H1 (cell line): ENCODE measurements at regions of chr11 and their contacts with region 1.

Region 1: GRCh38 chr11:17730608-17731462 is 3.7 kb upstream of the KCNC1 start:
- DNase-seq: peak; percentile 58 to 95
- H3K4me3 ChIP-seq: no peak overlapping the region
- H3K27ac ChIP-seq: no peak overlapping the region
- H3K4me1 ChIP-seq: peaks cover 0 to 4% (median under 1%) of the 10 kb centered on the region in 4 experiments; a peak in 3 of 7 replicates
- H3K27me3 ChIP-seq: peaks cover 9 to 30% (median 24%) of the 10 kb centered on the region in 4 experiments
- CTCF ChIP-seq: peak; percentile 93 to 98 (median 94)
- EP300 ChIP-seq: no peak
- POLR2A ChIP-seq: no peak
- RAD21 ChIP-seq: peak; percentile 98

Region 2: GRCh38 chr11:17457396-17458173 is 273.2 kb before region 1 on chr11:
- CTCF ChIA-PET with region 1: no interaction called
- POLR2A ChIA-PET with region 1: no interaction called
- DNase-seq: no peak
- H3K4me3 ChIP-seq: no peak overlapping the region; a peak in 1 of 8 replicates
- H3K27ac ChIP-seq: no peak overlapping the region
- H3K4me1 ChIP-seq: peaks cover 4 to 12% (median 9%) of the 10 kb centered on the region in 4 experiments; a peak in 6 of 7 replicates
- H3K27me3 ChIP-seq: no peaks in the 10 kb centered on the region
- CTCF ChIP-seq: no peak
- EP300 ChIP-seq: no peak
- POLR2A ChIP-seq: no peak
- RAD21 ChIP-seq: no peak

Region 3: GRCh38 chr11:17544181-17544622 is 186.6 kb before region 1 on chr11 and contains the start of gene USH1C:
- CTCF ChIA-PET with region 1: interaction called, 16 read pairs
- POLR2A ChIA-PET with region 1: no interaction called
- DNase-seq: peak in 1 of 2 experiments; percentile 95
- H3K4me3 ChIP-seq: peak within 1 kb of the TSS; percentile 50 to 77 (median 62)
- H3K27ac ChIP-seq: no peak within 1 kb of the TSS
- H3K4me1 ChIP-seq: peaks cover 6 to 20% (median 9%) of the 10 kb centered on the region in 4 experiments
- H3K27me3 ChIP-seq: peaks cover 0 to 24% (median 8%) of the 10 kb centered on the region in 4 experiments; a peak in 4 of 7 replicates
- CTCF ChIP-seq: no peak
- EP300 ChIP-seq: no peak
- POLR2A ChIP-seq: no peak; a peak in 1 of 3 replicates
- RAD21 ChIP-seq: no peak
- total RNA-seq, gene USH1C: 1.3 and 2.4 TPM in 2 replicates

Region 4: GRCh38 chr11:17650127-17650911 is 80.5 kb before region 1 on chr11:
- CTCF ChIA-PET with region 1: interaction called, 18 read pairs
- POLR2A ChIA-PET with region 1: no interaction called
- DNase-seq: no peak
- H3K4me3 ChIP-seq: no peak overlapping the region
- H3K27ac ChIP-seq: no peak overlapping the region
- H3K4me1 ChIP-seq: peaks cover 3 to 9% (median 7%) of the 10 kb centered on the region in 4 experiments; a peak in 6 of 7 replicates
- H3K27me3 ChIP-seq: peaks cover 0 to 9% (median 3%) of the 10 kb centered on the region in 4 experiments; a peak in 3 of 7 replicates
- CTCF ChIP-seq: no peak
- EP300 ChIP-seq: no peak
- POLR2A ChIP-seq: no peak
- RAD21 ChIP-seq: no peak

Region 5: DNA sequence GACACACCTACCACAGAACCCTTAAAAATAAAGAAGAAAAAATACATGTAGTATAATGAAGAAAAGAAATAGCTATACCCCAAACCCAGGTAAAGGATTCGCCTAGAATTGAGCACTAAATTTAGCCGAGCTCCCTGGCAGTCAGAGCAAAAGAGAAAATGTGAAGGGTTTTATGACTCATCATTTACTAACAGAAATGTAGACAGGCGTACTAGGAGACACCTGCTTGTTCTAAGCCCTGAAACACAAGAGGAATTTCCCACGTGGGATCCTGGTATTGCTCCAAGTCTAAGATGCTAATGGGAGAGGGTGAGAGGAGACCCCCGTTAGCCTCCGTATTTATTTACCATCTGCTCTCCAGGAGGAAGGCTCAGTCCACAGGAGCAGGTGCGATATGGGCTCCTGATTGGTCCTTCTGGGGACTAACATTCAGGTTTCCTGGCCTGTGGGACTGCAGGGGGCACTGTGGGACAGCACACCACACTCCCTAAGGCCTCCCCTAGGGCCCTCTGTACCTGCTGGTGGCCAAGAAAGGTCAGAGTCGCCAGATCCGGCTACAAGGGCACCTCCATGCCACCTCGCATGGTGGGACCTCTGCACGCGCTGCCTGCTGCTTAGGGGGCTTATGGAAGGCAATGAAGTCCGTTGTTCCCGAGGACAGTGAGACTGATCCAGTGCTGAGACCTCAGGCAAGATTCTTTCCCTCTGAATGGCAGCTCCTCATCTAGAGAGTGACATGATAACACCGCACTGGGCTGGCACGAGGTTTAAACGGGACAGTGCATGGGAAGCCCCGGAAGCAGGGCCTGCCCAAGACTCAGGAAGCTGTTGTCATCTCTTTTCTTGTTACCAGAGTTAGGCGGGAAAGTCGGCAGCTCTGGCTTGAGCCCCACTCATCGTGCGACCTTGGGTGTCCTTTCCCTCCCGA is 29.5 kb after region 1 on chr11:
- CTCF ChIA-PET with region 1: interaction called, 82 read pairs
- POLR2A ChIA-PET with region 1: interaction called, 3 read pairs
- DNase-seq: peak; percentile 77 to 84
- H3K4me3 ChIP-seq: no peak overlapping the region
- H3K27ac ChIP-seq: no peak overlapping the region
- H3K4me1 ChIP-seq: peaks cover 0 to 7% (median 1%) of the 10 kb centered on the region in 4 experiments; a peak in 3 of 7 replicates
- H3K27me3 ChIP-seq: no peaks in the 10 kb centered on the region
- CTCF ChIP-seq: peak; percentile 89 to 97 (median 91)
- EP300 ChIP-seq: no peak
- POLR2A ChIP-seq: no peak
- RAD21 ChIP-seq: peak; percentile 95 to 96

Region 6: GRCh38 chr11:17827006-17827405 is 96.2 kb after region 1 on chr11:
- CTCF ChIA-PET with region 1: interaction called, 55 read pairs
- POLR2A ChIA-PET with region 1: no interaction called
- DNase-seq: no peak
- H3K4me3 ChIP-seq: no peak overlapping the region
- H3K27ac ChIP-seq: no peak overlapping the region
- H3K4me1 ChIP-seq: 0 out of 7 replicates have a peak, but pooled peaks cover 0 to 2% (median 0%) of the 10 kb centered on the region in 4 experiments
- H3K27me3 ChIP-seq: no peaks in the 10 kb centered on the region
- CTCF ChIP-seq: peak in 2 of 3 experiments; percentile 64 to 72; a peak in 3 of 4 replicates
- EP300 ChIP-seq: no peak
- POLR2A ChIP-seq: no peak
- RAD21 ChIP-seq: peak; percentile 72 to 84

Region 7: GRCh38 chr11:17960091-17960490 is 229.3 kb after region 1 on chr11:
- CTCF ChIA-PET with region 1: interaction called, 13 read pairs
- POLR2A ChIA-PET with region 1: no interaction called
- DNase-seq: no peak
- H3K4me3 ChIP-seq: no peak overlapping the region
- H3K27ac ChIP-seq: no peak overlapping the region
- H3K4me1 ChIP-seq: no peaks in the 10 kb centered on the region
- H3K27me3 ChIP-seq: no peaks in the 10 kb centered on the region
- CTCF ChIP-seq: no peak
- EP300 ChIP-seq: no peak
- POLR2A ChIP-seq: no peak
- RAD21 ChIP-seq: no peak